ENCODE measurements at regions of chr12 and their contacts with region 1.

Region 1: GRCh38 chr12:9702255-9702654 is 30.6 kb downstream of the CLECL1 start:
- DNase-seq: no peak

Region 2: GRCh38 chr12:9673404-9674225 is 28.6 kb before region 1 on chr12:
- intact Hi-C with region 1: no loop called
- DNase-seq: peak; percentile 83

Region 3: GRCh38 chr12:9736936-9737705 is 34.9 kb after region 1 on chr12:
- intact Hi-C with region 1: loop called (anchors 2 kb)
- DNase-seq: no peak

Measured in cardiac septum (tissue), 1 donor.